Right ventricle myocardium inferior (tissue), 1 donor: ENCODE measurements at regions of chr21 and their contacts with region 1.

Region 1: GRCh38 chr21:42220138-42220701 is 1.3 kb downstream of the ABCG1 start:
- DNase-seq: no peak
- ATAC-seq: peak; percentile 56

Region 2: GRCh38 chr21:42176859-42177258 is 43.4 kb before region 1 on chr21:
- intact Hi-C with region 1: no loop called
- DNase-seq: no peak
- ATAC-seq: no peak

Region 3: GRCh38 chr21:42247716-42248115 is 27.5 kb after region 1 on chr21:
- intact Hi-C with region 1: no loop called
- DNase-seq: no peak
- ATAC-seq: no peak

Region 4: GRCh38 chr21:42258153-42258884 is 38.1 kb after region 1 on chr21:
- intact Hi-C with region 1: loop called (anchors 5 kb)
- DNase-seq: peak; percentile 90
- ATAC-seq: peak; percentile 47